Transverse colon (tissue), 4 donors: ENCODE measurements at regions of chr6 and their contacts with region 1.

Region 1: DNA sequence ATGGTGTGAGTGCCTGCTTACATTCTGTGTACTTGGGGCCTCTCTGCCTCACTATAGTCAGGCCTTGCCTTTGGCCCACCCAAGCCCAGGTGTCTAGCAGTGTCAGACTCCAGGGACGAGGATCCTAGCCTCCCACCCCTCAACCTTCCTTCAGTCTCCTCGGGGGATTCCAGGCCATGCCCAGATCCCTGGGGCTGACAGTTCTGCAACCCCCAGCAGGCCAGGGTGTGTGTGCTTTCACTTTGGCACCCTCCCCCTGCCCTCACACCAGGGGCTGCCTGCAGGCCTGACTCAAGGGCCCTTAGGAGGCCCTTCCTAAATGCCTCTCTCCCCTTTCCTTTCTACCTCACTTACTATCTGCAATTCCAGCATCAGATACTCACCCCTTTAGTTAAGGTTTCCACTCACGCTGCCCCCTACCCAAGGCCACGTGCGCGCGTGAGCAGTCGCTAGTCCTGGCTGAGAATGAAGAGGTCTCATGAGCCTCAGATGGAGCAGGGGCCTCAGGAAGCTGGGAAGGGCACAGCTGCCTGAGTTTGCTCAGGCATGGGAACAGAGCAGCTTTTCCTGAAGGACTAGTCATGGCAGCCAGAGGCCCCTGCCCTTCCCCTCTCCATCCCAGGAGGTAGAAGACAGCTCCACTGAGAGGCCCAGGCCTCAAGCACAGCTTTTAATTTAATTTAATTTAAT is 859 bp upstream of the CLPS start:
- DNase-seq: no peak
- H3K4me3 ChIP-seq: no peak overlapping the region
- H3K27ac ChIP-seq: no peak overlapping the region
- H3K4me1 ChIP-seq: no peaks in the 10 kb centered on the region
- H3K27me3 ChIP-seq: peaks cover under 1% of the 10 kb centered on the region
- CTCF ChIP-seq: no peak
- EP300 ChIP-seq: no peak
- POLR2A ChIP-seq: no peak

Region 2: GRCh38 chr6:35425284-35425683 is 372.7 kb before region 1 on chr6:
- in situ Hi-C with region 1: no loop called
- intact Hi-C with region 1: no loop called
- DNase-seq: no peak
- H3K4me3 ChIP-seq: no peak overlapping the region
- H3K27ac ChIP-seq: peak overlapping the region in 1 of 4 donors; percentile 12
- H3K4me1 ChIP-seq: no peaks in the 10 kb centered on the region
- H3K27me3 ChIP-seq: no peaks in the 10 kb centered on the region
- CTCF ChIP-seq: no peak
- EP300 ChIP-seq: no peak
- POLR2A ChIP-seq: no peak

Region 3: DNA sequence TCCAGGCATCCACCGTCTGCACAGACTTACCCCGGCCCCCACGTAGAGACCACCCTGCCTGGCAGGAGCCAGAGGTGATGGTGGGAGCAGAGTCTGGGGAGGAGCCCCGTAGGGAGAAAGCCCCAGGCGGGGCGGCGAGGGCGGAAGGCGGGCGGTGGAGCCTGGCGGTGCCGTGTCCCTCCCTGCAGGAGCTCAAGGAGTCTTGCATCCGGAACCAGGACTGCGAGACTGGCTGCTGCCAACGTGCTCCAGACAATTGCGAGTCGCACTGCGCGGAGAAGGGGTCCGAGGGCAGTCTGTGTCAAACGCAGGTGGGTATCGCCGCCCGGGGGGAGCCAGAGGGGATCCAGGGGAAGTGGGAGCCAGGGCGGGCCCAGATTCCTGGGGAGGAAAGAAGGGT is 11.2 kb before region 1 on chr6:
- in situ Hi-C with region 1: no loop called
- intact Hi-C with region 1: loop called (anchors 1 kb)
- DNase-seq: no peak
- H3K4me3 ChIP-seq: no peak overlapping the region
- H3K27ac ChIP-seq: no peak overlapping the region
- H3K4me1 ChIP-seq: no peaks in the 10 kb centered on the region
- H3K27me3 ChIP-seq: peaks cover 49% of the 10 kb centered on the region
- CTCF ChIP-seq: no peak
- EP300 ChIP-seq: no peak
- POLR2A ChIP-seq: no peak